Brain microvascular endothelial cell (primary cell): ENCODE measurements at regions of chr22 and their contacts with region 1.

Region 1: GRCh38 chr22:46484861-46485595 is 52.4 kb downstream of the CELSR1 start:
- DNase-seq: no peak
- H3K4me3 ChIP-seq: no peak overlapping the region
- H3K27ac ChIP-seq: no peak overlapping the region
- H3K27me3 ChIP-seq: no peaks in the 10 kb centered on the region
- CTCF ChIP-seq: no peak

Region 2: GRCh38 chr22:45942787-45943493 is 542.1 kb before region 1 on chr22:
- in situ Hi-C with region 1: no loop called
- DNase-seq: no peak
- H3K4me3 ChIP-seq: no peak overlapping the region
- H3K27ac ChIP-seq: no peak overlapping the region
- H3K27me3 ChIP-seq: no peaks in the 10 kb centered on the region
- CTCF ChIP-seq: no peak

Region 3: DNA sequence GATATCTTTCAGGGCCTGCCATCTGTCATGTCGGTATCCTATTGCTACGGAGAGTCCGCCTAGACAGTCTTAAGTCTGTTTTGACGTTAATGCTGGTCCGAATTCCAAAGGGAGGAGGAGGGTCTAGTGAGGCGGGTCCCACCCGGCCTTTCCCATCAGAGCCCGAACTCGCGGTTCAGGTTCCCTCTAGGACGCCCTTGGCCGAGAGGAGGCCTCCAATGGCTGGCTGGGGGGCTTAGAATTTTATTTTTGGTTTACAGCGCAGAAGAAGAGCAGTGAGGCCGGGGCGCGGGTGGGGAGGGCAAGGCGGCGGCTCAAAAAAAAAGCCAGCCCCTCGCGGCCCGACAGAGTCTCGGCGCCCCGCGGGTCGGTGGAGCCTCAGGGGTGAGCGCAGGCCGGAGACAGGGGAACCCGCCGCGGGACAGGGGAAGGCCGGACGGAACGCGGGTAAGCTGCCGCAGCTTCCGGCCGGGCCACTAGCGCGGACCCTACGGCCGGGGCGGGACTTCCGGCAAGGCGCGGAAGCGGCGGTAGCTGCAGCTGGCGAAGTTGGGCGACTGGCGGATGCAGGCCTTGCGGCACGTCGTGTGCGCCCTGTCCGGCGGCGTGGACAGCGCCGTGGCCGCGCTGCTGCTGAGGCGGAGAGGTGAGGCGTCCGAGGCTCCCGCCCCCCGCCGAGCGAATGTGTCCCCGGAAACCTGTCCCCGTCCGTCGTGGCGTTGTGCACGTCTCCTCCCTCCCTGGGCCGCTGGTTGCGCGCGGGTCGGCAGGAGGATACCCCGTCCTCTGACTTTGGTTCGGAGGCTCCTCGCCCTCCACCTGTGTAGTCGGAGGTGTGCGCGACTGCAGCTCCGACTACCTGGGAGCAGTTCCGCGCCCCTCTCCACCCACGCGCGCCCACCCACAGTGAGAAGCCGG is 149.6 kb before region 1 on chr22 and contains the start of gene TRMU:
- in situ Hi-C with region 1: loop called (anchors 25 kb)
- DNase-seq: peak; percentile 53
- H3K4me3 ChIP-seq: peak within 1 kb of the TSS; percentile 96
- H3K27ac ChIP-seq: peak within 1 kb of the TSS; percentile 82
- H3K27me3 ChIP-seq: no peaks in the 10 kb centered on the region
- CTCF ChIP-seq: no peak

Region 4: GRCh38 chr22:46399251-46399999 is 85.6 kb before region 1 on chr22:
- in situ Hi-C with region 1: no loop called
- DNase-seq: no peak
- H3K4me3 ChIP-seq: no peak overlapping the region
- H3K27ac ChIP-seq: no peak overlapping the region
- H3K27me3 ChIP-seq: no peaks in the 10 kb centered on the region
- CTCF ChIP-seq: no peak